CD4-positive, alpha-beta memory T cell (primary cell): ENCODE measurements at regions of chr10 and their contacts with region 1.

Region 1: DNA sequence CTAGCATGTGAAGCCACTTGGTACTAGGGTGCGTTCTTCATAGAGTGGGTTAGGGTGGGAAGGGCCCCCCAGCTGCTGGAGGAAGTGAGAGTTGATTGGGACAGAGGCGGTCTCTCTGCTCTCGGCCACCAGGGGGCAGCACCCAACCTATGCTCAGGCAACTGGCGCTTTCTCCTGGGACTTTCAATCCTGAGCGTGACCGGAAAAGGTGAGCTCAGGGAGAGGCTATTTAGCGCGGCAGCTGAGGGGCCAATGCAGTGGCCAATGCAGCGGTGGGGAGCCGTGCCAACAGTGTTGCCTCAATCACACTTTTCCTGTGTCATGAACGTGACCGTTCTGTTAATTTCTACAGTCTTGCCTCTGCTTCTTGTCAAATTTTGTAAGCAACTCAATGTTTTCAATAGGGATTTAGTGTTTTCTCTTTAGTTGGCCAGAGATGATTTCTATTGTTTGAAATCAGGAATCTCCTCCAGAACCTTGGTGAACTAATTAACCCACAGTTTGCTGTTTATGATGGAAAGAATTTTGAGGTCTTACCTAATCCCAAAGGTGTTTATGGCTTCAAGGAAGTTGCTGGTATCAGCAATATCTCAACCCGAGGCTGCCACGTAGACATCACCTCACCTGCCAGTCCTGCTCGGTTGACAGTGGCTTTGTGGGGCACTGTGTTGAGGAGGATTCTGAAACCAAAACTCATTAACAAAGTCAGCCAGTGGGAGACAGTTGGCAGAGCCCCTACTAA is 67.9 kb upstream of the PDZD8 start:
- DNase-seq: peak; percentile 5 to 43 (median 18)
- H3K4me3 ChIP-seq: no peak overlapping the region
- H3K4me3 Mint-ChIP-seq: peak overlapping the region in 3 of 8 donors; percentile 30 to 66 (median 62)
- H3K27ac ChIP-seq: no peak overlapping the region
- H3K27ac Mint-ChIP-seq: no peak overlapping the region
- H3K4me1 ChIP-seq: no peaks in the 10 kb centered on the region
- H3K4me1 Mint-ChIP-seq: peaks cover 0 to 5% (median 0%) of the 10 kb centered on the region in 4 donors
- H3K27me3 ChIP-seq: no peaks in the 10 kb centered on the region
- H3K27me3 Mint-ChIP-seq: peaks cover 15 to 23% of the 10 kb centered on the region in 2 donors

Region 2: GRCh38 chr10:117431160-117431559 is 12.0 kb before region 1 on chr10:
- CTCF ChIA-PET with region 1: interaction called, 18 read pairs
- POLR2A ChIA-PET with region 1: no interaction called
- intact Hi-C with region 1: no loop called
- DNase-seq: no peak
- H3K4me3 ChIP-seq: no peak overlapping the region
- H3K4me3 Mint-ChIP-seq: no peak overlapping the region
- H3K27ac ChIP-seq: no peak overlapping the region
- H3K27ac Mint-ChIP-seq: peak overlapping the region in 1 of 7 donors; percentile 19
- H3K4me1 ChIP-seq: no peaks in the 10 kb centered on the region
- H3K4me1 Mint-ChIP-seq: no peaks in the 10 kb centered on the region
- H3K27me3 ChIP-seq: no peaks in the 10 kb centered on the region
- H3K27me3 Mint-ChIP-seq: peaks cover 3 to 18% of the 10 kb centered on the region in 2 donors